ENCODE measurements at regions of chr19 and their contacts with region 1.

Region 1: DNA sequence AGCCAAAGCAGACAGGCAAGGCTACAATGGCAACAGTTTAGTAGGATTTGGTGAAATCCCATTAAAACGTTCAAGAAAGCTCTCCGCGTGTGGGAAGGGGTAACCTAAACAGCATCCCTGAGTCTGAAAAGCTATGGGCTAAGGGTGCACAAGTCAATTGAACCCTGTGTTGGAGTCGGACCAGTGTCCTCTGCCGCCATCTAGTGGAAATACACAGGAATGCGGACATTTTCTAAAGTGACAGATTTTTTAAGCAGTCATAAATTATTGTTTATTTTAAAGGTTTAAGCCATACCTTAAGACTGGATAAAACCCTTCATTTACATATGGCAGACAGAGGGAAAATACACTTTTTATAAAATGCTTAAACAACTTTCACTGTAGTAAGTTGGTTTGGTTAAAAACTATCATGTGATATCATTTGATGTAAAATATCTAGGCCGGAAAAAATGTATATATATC is 26.5 kb upstream of the LSM14A start:
- DNase-seq: peak in 1 of 2 donors; percentile 46
- ATAC-seq: peak in 4 of 8 donors; percentile 27 to 56 (median 41)
- H3K4me3 ChIP-seq: no peak overlapping the region
- H3K27ac ChIP-seq: no peak overlapping the region
- H3K4me1 ChIP-seq: no peaks in the 10 kb centered on the region
- H3K27me3 ChIP-seq: peaks cover 0 to 3% (median 0%) of the 10 kb centered on the region in 7 donors
- CTCF ChIP-seq: peak; percentile 68 to 88 (median 80)

Region 2: GRCh38 chr19:33785795-33786194 is 360.0 kb before region 1 on chr19:
- intact Hi-C with region 1: loop called in 1 of 10 experiments (anchors 10 kb)
- DNase-seq: no peak
- ATAC-seq: no peak
- H3K4me3 ChIP-seq: no peak overlapping the region
- H3K27ac ChIP-seq: no peak overlapping the region
- H3K4me1 ChIP-seq: peaks cover 0 to 3% (median 0%) of the 10 kb centered on the region in 9 donors
- H3K27me3 ChIP-seq: peaks cover 0 to 32% (median 14%) of the 10 kb centered on the region in 7 donors
- CTCF ChIP-seq: no peak

Region 3: DNA sequence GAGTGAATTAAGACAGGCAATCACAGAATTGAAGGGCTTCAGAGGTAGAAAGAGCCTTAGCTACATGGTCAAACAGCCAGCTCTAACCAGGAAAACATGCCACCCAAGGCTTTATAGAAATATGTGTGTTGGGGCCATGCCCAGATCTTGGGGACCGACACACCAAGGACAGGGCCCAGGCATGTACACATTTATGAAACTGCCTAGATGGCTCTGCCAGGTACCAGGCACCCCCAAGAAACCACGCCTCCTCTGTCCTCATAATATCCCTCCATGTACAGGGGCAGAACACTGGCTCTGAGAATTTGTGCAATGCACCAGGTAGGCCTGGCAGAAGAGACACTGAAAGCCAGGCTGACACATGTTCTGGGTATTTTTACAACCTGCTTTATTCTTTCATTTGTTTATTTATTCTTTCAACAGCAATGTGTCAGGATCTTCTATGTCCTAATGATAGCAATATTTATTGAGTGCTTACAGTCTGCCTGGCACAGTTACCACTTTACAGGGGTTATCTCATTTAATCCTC is 111.4 kb before region 1 on chr19:
- intact Hi-C with region 1: loop called in 1 of 10 experiments (anchors 10 kb)
- DNase-seq: no peak
- ATAC-seq: no peak
- H3K4me3 ChIP-seq: no peak overlapping the region
- H3K27ac ChIP-seq: no peak overlapping the region
- H3K4me1 ChIP-seq: peaks cover 0 to 6% (median 0%) of the 10 kb centered on the region in 9 donors
- H3K27me3 ChIP-seq: peaks cover 0 to 20% (median 5%) of the 10 kb centered on the region in 7 donors
- CTCF ChIP-seq: no peak

Region 4: GRCh38 chr19:34041925-34042521 is 103.7 kb before region 1 on chr19:
- intact Hi-C with region 1: loop called in 8 of 10 experiments (anchors 2 to 10 kb)
- DNase-seq: peak; percentile 50 to 68
- ATAC-seq: peak in 1 of 8 donors; percentile 45
- H3K4me3 ChIP-seq: no peak overlapping the region
- H3K27ac ChIP-seq: no peak overlapping the region
- H3K4me1 ChIP-seq: no peaks in the 10 kb centered on the region
- H3K27me3 ChIP-seq: peaks cover 0 to 32% (median 0%) of the 10 kb centered on the region in 7 donors
- CTCF ChIP-seq: peak; percentile 38 to 91 (median 80)

Measured in heart right ventricle (tissue), 16 donors.